ENCODE measurements at regions of chr6 and their contacts with region 1.

Region 1: DNA sequence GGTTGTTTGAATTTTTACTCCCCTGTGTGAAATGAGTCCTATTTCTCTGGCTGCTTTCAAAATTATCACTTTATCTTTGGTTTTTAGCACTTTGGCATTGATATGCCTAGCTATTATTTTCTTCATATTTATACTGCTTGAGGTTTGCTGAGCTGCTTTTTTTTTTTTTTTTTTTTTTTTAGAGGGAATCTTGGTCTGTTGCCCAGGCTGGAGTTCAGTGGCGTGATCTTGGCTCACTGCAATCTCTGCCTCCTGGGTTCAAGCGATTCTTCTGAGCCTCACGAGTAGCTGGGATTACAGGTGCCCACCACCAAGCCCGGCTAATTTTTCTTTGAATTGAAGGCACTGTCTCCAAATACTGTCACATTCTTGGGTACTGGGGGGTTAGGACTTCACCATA is 40.6 kb downstream of the STXBP5 start:
- DNase-seq: no peak
- H3K4me3 ChIP-seq: no peak overlapping the region
- H3K27ac ChIP-seq: no peak overlapping the region
- H3K4me1 ChIP-seq: no peaks in the 10 kb centered on the region
- H3K27me3 ChIP-seq: no peaks in the 10 kb centered on the region
- CTCF ChIP-seq: no peak
- POLR2A ChIP-seq: no peak

Region 2: GRCh38 chr6:146498309-146498708 is 746.5 kb before region 1 on chr6:
- intact Hi-C with region 1: no loop called
- DNase-seq: no peak
- H3K4me3 ChIP-seq: no peak overlapping the region
- H3K27ac ChIP-seq: no peak overlapping the region
- H3K4me1 ChIP-seq: no peaks in the 10 kb centered on the region
- H3K27me3 ChIP-seq: no peaks in the 10 kb centered on the region
- CTCF ChIP-seq: no peak
- POLR2A ChIP-seq: no peak

Region 3: GRCh38 chr6:148969603-148970061 is 1724.8 kb after region 1 on chr6:
- intact Hi-C with region 1: loop called (anchors 10 kb)
- DNase-seq: no peak
- H3K4me3 ChIP-seq: no peak overlapping the region
- H3K27ac ChIP-seq: no peak overlapping the region
- H3K4me1 ChIP-seq: no peaks in the 10 kb centered on the region
- H3K27me3 ChIP-seq: no peaks in the 10 kb centered on the region
- CTCF ChIP-seq: no peak
- POLR2A ChIP-seq: no peak